Heart left ventricle (tissue), 16 donors: ENCODE measurements at regions of chr18 and their contacts with region 1.

Region 1: GRCh38 chr18:13520306-13520705 is 206.1 kb downstream of the FAM210A start:
- DNase-seq: peak in 2 of 5 donors; percentile 67 to 77
- ATAC-seq: peak; percentile 89 to 93 (median 92)
- H3K4me3 ChIP-seq: no peak overlapping the region
- H3K27ac ChIP-seq: peak overlapping the region in 9 of 12 donors; percentile 20 to 87 (median 57)
- H3K4me1 ChIP-seq: peaks cover 0 to 27% (median 13%) of the 10 kb centered on the region in 12 donors
- H3K27me3 ChIP-seq: no peaks in the 10 kb centered on the region
- CTCF ChIP-seq: no peak
- POLR2A ChIP-seq: no peak

Region 2: DNA sequence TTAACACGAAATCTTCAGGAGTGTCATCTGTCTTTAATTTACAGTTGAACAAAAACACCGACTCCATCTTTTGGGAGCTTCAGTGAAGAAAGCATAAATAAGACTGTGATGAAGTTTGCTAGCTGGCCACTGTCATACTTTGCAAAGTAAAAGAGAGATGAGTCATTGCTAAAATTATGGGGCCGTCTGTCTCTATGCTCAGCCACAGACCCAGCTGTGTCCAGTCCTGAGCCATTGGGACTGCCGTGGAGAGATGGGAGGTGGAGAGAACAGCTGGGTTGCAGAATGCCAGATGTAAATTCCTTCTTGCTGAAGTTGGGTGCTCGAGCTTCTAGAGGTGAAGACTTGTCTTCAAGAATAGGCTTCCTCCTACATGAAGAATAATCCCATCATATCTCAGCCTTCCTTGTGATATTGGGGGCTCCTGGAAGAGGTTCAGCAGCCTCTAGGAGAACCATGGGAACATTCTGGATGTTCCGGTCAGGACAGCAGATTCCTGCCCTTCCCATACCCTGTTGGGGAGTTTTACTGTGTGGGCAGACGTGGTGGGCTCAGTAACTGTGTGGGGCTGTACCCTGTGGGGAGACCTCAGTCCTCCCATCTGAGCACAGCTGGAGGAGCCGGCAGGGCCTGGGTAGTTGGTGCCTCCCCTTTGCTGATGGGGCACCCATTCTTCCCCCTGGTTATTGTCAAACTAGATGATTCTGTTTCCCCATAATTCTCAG is 230.7 kb before region 1 on chr18:
- intact Hi-C with region 1: loop called in 1 of 10 experiments (anchors 10 kb)
- DNase-seq: peak in 4 of 5 donors; percentile 41 to 72 (median 54)
- ATAC-seq: peak; percentile 59 to 93 (median 85)
- H3K4me3 ChIP-seq: no peak overlapping the region
- H3K27ac ChIP-seq: peak overlapping the region in 6 of 12 donors; percentile 25 to 64 (median 51)
- H3K4me1 ChIP-seq: peaks cover 0 to 39% (median 14%) of the 10 kb centered on the region in 12 donors
- H3K27me3 ChIP-seq: no peaks in the 10 kb centered on the region
- CTCF ChIP-seq: no peak
- POLR2A ChIP-seq: no peak

Region 3: DNA sequence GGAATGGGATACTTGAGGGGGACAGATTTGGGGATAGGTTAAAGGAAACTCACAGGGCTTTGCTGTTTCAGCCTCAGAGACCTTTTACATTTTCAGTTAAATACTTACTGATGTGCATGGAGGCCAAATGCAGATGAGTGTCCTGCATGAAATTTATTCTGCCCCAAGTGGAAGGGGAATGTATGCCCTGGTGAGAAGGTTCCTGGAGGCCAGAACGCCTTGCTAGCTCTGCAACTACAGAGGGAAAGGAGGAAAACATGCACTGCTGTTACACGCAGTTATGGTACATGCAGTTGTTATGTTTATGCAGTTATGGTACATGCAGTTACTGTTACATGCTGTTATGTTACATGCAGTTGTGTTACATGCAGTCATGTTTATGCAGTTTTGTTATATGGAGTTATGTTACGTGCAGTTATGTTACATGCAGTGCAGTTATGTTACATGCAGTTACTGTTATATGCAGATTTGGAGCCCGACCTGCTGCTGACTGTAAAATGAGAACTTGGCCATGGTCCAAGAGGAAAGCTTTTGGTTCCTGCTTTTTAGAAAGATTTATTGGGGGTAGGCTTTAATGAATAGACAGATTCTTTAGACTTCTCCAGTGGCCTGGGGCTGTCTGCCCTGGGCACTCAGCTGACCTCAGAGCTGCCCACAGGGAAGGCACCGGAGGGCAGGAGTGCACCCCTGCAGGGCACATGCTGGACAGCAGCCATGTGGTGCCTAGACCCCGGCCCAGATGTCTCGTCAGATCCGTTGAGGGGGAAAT is 217.7 kb before region 1 on chr18:
- intact Hi-C with region 1: loop called in 2 of 10 experiments (anchors 10 kb)
- DNase-seq: no peak
- ATAC-seq: no peak
- H3K4me3 ChIP-seq: no peak overlapping the region
- H3K27ac ChIP-seq: no peak overlapping the region
- H3K4me1 ChIP-seq: peaks cover 3 to 57% (median 37%) of the 10 kb centered on the region in 12 donors
- H3K27me3 ChIP-seq: no peaks in the 10 kb centered on the region
- CTCF ChIP-seq: no peak
- POLR2A ChIP-seq: no peak

Region 4: DNA sequence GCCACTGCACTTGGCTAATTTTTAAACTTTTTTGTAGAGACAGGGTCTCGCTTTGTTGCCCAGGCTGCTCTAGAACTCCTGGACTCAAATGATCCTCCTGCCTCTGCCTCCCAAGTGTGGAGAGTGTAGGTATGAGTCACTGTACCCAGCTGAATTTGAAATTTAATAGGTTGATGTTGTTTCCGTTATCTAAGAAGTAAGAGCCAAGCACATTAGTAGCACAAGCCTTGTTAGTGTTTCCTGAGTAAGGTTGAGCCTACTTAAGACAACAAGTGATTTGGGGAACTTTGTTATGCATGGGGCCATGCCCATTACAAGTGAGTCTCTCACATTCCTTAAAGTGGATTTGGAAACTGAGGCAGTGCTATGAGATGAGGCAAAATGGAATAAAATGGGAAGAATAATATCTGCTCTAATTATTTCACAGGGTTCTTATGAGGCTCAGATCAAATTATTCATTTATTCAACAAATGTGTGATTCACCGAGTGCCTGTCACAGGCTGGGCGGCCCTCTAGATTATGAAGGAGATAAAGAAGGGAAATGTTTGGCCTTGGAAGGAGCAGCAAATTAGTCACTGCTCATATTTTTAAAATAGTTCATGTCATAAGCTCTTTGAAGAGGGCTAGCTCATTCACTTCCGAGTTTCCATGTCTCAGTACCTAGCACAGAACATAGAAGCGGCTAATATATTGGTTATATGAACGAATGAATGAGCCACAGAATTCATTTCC is 84.5 kb before region 1 on chr18:
- intact Hi-C with region 1: loop called in 1 of 10 experiments (anchors 5 kb)
- DNase-seq: no peak
- ATAC-seq: peak; percentile 35 to 76 (median 64)
- H3K4me3 ChIP-seq: no peak overlapping the region
- H3K27ac ChIP-seq: peak overlapping the region in 8 of 12 donors; percentile 23 to 61 (median 41)
- H3K4me1 ChIP-seq: peaks cover 0 to 45% (median 25%) of the 10 kb centered on the region in 12 donors
- H3K27me3 ChIP-seq: no peaks in the 10 kb centered on the region
- CTCF ChIP-seq: no peak
- POLR2A ChIP-seq: no peak

Region 5: GRCh38 chr18:13447626-13448334 is 72.5 kb before region 1 on chr18:
- intact Hi-C with region 1: loop called in 1 of 10 experiments (anchors 5 kb)
- DNase-seq: peak in 3 of 5 donors; percentile 49 to 63 (median 58)
- ATAC-seq: peak in 3 of 4 donors; percentile 31 to 59 (median 39)
- H3K4me3 ChIP-seq: peak overlapping the region in 2 of 12 donors; percentile 0 to 22
- H3K27ac ChIP-seq: peak overlapping the region in 3 of 12 donors; percentile 12 to 51 (median 32)
- H3K4me1 ChIP-seq: peaks cover 0 to 57% (median 27%) of the 10 kb centered on the region in 12 donors
- H3K27me3 ChIP-seq: no peaks in the 10 kb centered on the region
- CTCF ChIP-seq: no peak
- POLR2A ChIP-seq: no peak

Region 6: DNA sequence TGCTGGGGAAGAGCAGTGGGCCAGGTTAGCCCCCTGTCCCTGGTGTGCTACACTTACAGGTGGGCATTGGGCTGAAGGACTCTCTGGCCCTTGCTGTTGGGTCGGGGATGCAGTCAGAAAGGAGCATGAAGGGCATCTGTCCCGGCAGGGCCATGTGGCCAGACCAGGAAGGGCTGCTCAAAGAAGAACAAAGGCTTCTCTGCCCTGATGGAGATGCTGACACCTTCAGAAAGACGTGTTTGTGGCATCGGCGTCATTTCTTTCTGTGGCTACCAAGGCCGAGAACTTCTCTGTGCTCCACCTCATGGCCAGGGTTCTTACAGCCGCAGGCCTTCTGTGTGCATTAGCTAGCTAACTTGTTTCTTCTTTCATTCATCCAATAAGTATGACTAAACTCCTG is 33.1 kb before region 1 on chr18:
- intact Hi-C with region 1: no loop called
- DNase-seq: peak in 1 of 5 donors; percentile 10
- ATAC-seq: no peak
- H3K4me3 ChIP-seq: no peak overlapping the region
- H3K27ac ChIP-seq: no peak overlapping the region
- H3K4me1 ChIP-seq: peaks cover 0 to 2% (median 0%) of the 10 kb centered on the region in 12 donors
- H3K27me3 ChIP-seq: no peaks in the 10 kb centered on the region
- CTCF ChIP-seq: no peak
- POLR2A ChIP-seq: no peak

Region 7: GRCh38 chr18:13932285-13933025 is 412.1 kb after region 1 on chr18:
- intact Hi-C with region 1: no loop called
- DNase-seq: no peak
- ATAC-seq: no peak
- H3K4me3 ChIP-seq: no peak overlapping the region
- H3K27ac ChIP-seq: no peak overlapping the region
- H3K4me1 ChIP-seq: no peaks in the 10 kb centered on the region
- H3K27me3 ChIP-seq: no peaks in the 10 kb centered on the region
- CTCF ChIP-seq: no peak
- POLR2A ChIP-seq: no peak